Lower leg skin (tissue), 4 donors: ENCODE measurements at regions of chr1 and their contacts with region 1.

Region 1: GRCh38 chr1:110455151-110455550 is 4.2 kb downstream of the PROK1 start:
- DNase-seq: no peak
- H3K4me3 ChIP-seq: no peak overlapping the region
- CTCF ChIP-seq: no peak
- POLR2A ChIP-seq: no peak

Region 2: DNA sequence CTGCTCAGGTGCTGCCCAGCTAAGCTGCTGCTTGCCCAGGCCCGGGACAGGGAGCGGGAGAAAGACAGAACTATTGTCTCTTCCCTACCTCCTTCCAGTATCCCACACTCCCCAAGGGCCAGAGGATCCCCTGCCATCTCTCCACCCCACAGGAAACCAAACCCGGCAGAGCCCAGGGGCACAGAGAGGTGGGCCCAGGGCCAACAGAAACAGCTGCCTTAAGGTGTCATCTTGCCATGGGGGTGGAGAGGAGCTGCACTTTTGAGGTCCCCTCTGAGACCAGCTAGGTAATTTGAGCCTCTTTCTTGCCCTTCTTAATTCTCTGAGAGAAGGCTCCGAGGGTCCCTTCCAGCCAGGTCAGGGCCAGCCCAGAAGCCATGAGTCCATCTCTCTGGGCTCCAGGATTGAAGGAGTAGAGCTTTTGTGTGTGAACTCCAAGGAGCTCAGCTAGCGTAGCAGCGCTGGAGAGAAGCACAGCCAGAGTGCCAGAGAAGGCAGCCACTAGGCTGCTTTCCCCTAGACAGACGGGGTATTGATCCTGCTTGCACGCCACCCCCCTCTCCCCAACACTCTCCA is 925.2 kb before region 1 on chr1:
- intact Hi-C with region 1: no loop called
- DNase-seq: peak in 1 of 2 donors; percentile 57
- H3K4me3 ChIP-seq: no peak overlapping the region
- CTCF ChIP-seq: no peak
- POLR2A ChIP-seq: no peak

Region 3: GRCh38 chr1:109850827-109851226 is 604.3 kb before region 1 on chr1:
- intact Hi-C with region 1: no loop called
- DNase-seq: no peak
- H3K4me3 ChIP-seq: no peak overlapping the region
- CTCF ChIP-seq: no peak
- POLR2A ChIP-seq: no peak

Region 4: DNA sequence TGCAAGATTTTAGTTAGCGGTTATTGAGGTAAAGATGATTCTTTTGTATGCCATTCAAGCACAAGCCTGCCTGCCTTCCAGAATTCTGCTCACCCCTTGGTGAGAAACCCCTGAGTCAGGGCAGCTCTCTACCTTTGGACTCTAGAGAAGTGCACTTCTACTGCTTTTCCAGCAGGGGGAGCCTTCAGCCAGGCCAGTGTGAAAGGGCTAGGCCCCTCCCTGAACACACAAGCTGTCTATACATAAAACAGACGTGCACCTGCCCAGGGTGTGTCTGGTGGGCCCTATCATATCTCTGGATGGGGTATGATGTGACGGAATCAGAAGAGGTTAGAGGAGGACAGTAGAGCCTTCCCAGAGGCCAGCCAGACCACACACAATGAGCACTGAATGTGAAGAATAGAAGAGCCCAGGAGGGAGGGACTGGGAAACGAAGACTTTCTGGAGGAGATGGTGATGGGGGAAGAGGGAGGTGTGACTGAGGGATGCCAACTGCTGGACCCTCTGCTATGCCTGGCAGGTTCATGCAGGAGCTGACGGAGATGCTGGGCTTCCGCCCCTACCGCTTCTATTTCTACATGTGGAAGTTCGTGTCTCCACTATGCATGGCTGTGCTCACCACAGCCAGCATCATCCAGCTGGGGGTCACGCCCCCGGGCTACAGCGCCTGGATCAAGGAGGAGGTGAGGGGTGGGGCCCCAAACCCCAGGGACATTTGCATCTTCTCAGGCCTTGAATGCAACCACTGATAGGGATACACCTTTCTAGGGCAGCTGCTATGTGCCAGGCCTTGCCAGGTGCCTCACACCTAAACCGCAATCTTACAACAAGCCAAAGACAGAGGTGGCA is 258.0 kb before region 1 on chr1:
- intact Hi-C with region 1: loop called (anchors 5 kb)
- DNase-seq: no peak
- H3K4me3 ChIP-seq: no peak overlapping the region
- CTCF ChIP-seq: peak in 1 of 3 donors; percentile 62
- POLR2A ChIP-seq: no peak